Activated naive CD4-positive, alpha-beta T cell treated with anti-CD3 and anti-CD28 coated beads, Interleukin-2, amount 10 ng/mL, durations not matched to agents 7 days and 5 days (primary cell): ENCODE measurements at regions of chr1 and their contacts with region 1.

Region 1: DNA sequence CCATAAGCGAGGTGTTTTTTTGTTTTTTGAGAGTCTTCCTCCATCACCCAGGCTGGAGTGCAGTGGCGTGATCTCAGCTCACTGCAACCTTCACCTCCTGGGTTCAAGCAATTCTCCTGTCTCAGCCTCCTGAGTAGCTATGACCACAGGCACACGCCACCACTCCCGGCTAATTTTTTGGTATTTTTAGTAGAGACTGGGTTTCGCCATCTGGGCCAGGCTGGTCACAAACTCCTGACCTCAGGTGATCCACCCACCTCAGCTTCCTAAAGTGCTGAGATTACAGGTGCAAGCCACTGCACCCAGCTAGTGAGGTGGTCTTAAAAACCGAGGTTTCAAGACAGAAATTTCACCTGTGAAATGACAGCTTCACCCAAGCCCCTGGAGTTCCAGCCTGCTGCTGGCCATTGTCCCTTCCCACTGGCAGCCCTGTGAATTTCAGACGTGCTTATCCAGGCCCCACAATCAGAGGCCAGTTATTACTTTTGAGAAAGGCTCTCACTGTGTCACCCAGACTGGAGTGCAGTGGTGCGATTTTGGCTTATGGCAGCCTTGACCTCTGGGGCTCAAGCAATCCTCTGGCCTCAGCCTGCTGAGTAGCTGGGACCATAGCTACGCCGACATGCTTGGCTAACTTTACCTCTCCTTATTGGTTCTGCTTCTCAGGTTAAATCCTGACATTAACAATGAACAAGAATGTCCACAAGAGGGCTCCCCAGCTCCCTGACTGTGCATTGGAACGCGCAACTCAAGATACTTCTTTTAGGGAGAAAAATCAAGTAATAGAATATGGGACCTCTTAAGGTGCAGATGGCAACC is 19.4 kb downstream of the ENO1 start:
- DNase-seq: peak; percentile 67
- H3K4me3 Mint-ChIP-seq: no peak overlapping the region
- H3K27ac Mint-ChIP-seq: peak overlapping the region; percentile 78
- H3K4me1 Mint-ChIP-seq: peaks cover 52% of the 10 kb centered on the region
- H3K27me3 Mint-ChIP-seq: no peaks in the 10 kb centered on the region

Region 2: DNA sequence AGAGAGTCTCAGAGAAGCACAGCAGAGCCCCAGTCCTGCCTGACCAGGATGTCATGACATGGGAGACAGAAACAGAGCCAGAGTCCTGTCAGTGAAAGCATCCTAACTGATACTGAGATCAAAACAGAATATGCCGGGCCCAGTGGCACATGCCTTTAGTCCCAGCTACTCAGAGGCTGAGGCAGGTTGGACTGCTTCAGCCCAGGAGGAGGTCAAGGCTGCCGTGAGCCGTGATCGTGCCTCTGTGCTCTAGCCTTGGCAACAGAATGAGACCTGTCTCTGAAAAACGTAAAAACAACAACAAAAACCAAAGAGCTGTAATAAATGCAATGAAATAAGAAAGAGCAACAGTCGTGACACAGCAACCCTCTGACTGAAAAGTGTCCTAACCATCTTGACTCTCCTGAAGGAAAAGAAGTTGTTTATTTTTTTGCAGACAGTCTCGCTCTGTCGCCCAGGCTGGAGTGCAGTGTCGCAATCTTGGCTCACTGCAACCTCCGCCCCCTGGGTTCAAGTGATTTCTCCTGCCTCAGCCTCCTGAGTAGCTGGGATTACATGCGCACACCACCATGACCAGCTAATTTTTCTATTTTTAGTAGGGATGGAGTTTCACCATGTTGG is 352.0 kb before region 1 on chr1:
- CTCF ChIA-PET with region 1: no interaction called
- DNase-seq: no peak
- H3K4me3 Mint-ChIP-seq: no peak overlapping the region
- H3K27ac Mint-ChIP-seq: peak overlapping the region; percentile 47
- H3K4me1 Mint-ChIP-seq: peaks cover 32% of the 10 kb centered on the region
- H3K27me3 Mint-ChIP-seq: no peaks in the 10 kb centered on the region

Region 3: DNA sequence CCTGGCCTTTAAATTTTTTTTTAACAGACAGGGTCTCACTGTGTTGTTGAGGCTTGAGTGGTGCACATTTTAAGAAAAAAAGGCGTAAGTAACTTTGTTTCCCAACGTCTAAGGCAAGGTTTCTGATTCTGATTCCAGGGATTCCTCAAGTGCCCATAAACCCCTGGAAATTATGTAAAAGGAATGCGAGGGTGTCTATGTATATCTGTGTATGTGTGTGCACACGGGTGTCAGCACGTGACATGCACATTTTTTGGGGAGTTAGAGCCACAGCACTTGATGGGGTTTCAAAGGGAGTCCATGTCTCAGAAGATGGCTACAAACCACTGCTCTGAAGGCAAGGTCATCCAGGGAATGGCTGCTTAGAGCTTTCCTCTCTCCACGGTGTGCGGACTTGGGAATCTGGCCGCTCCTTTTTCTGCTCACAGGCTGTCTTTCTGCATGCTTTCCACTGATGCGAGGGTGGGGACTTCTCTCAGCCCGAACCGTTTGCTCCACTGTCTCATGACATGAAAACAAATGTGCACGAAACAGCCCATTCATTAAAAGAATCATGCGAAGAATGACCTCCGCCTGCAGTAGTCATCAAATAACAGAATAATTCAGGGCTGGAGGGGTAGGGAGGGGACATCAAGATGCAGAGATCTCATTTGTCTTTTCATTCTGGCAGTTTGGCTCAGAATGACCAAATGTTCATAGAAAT is 23.0 kb before region 1 on chr1:
- CTCF ChIA-PET with region 1: no interaction called
- DNase-seq: no peak
- H3K4me3 Mint-ChIP-seq: no peak overlapping the region
- H3K27ac Mint-ChIP-seq: no peak overlapping the region
- H3K4me1 Mint-ChIP-seq: no peaks in the 10 kb centered on the region
- H3K27me3 Mint-ChIP-seq: peaks cover 25% of the 10 kb centered on the region

Region 4: GRCh38 chr1:8873506-8874229 is 14.6 kb after region 1 on chr1:
- CTCF ChIA-PET with region 1: interaction called, 16 read pairs
- DNase-seq: peak; percentile 77
- H3K4me3 Mint-ChIP-seq: peak overlapping the region; percentile 96
- H3K27ac Mint-ChIP-seq: peak overlapping the region; percentile 98
- H3K4me1 Mint-ChIP-seq: peaks cover 72% of the 10 kb centered on the region
- H3K27me3 Mint-ChIP-seq: peaks cover 7% of the 10 kb centered on the region